ENCODE measurements at regions of chr2 and their contacts with region 1.

Region 1: GRCh38 chr2:151638191-151638933 is 95.9 kb downstream of the NEB start:
- DNase-seq: no peak
- H3K4me3 Mint-ChIP-seq: peak overlapping the region; percentile 30
- H3K27ac Mint-ChIP-seq: peak overlapping the region; percentile 90
- H3K4me1 Mint-ChIP-seq: peaks cover 26% of the 10 kb centered on the region
- H3K27me3 Mint-ChIP-seq: peaks cover 2% of the 10 kb centered on the region

Region 2: DNA sequence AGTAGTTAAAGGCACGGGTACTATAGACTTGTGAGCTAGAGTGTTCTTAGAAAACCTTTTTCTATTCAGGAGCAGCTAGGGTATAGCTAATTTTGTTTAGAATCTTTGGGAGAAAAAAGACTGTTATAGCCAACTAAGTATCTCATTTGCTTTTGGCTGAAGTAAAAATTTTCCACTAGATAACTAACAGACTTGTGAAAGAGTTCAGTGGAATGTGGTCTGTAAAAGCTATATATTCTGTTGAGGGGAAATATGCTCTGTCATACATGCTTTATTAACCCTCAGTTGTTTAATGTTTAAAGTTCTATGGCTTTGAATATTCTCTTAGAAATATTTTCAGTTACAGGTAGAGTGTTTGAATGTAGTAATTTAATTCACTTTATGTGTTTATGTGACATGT is 179.0 kb before region 1 on chr2:
- intact Hi-C with region 1: loop called (anchors 10 kb)
- DNase-seq: no peak
- H3K4me3 Mint-ChIP-seq: no peak overlapping the region
- H3K27ac Mint-ChIP-seq: no peak overlapping the region
- H3K4me1 Mint-ChIP-seq: no peaks in the 10 kb centered on the region
- H3K27me3 Mint-ChIP-seq: no peaks in the 10 kb centered on the region

Region 3: GRCh38 chr2:152330235-152330866 is 692.0 kb after region 1 on chr2:
- intact Hi-C with region 1: no loop called
- DNase-seq: no peak
- H3K4me3 Mint-ChIP-seq: no peak overlapping the region
- H3K27ac Mint-ChIP-seq: no peak overlapping the region
- H3K4me1 Mint-ChIP-seq: peaks cover 7% of the 10 kb centered on the region
- H3K27me3 Mint-ChIP-seq: peaks cover 29% of the 10 kb centered on the region

Measured in activated T-helper 2 cell treated with anti-CD3 and anti-CD28 coated beads, Interferon-gamma antibody, Interleukin-2, Interleukin-4, amounts not matched to agents 10 μg/mL and 5 μg/mL and 100 μg/mL, durations not matched to agents 14 hours and 24 hours and 36 hours (primary cell).